Right cardiac atrium (tissue), 5 donors: ENCODE measurements at regions of chr17 and their contacts with region 1.

Region 1: DNA sequence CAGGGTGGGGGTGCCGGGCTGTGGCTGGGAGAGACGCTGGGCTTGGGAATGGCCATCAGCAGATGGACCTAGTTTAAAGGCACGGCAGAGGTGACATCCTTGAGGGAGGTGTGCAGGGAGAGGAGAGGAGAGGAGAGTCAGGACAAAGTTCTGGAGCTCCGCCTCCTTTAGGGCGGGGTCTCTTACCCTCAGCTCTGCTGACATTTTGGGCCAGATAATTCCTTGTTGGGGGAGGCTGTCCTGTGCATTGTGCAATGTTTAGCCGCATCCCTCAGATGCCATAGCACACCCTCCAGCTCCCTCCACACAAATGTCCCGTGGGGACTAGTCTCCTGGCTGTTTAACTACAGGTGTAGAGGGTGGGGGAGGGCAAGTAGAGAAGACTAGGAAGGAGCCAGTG is 48.3 kb downstream of the ARHGAP23 start:
- DNase-seq: peak in 2 of 3 donors; percentile 31 to 47
- ATAC-seq: no peak
- H3K4me3 ChIP-seq: no peak overlapping the region
- H3K27ac ChIP-seq: no peak overlapping the region
- H3K4me1 ChIP-seq: no peaks in the 10 kb centered on the region
- H3K27me3 ChIP-seq: no peaks in the 10 kb centered on the region

Region 2: GRCh38 chr17:38428112-38428642 is 48.4 kb before region 1 on chr17 and contains the start of gene ARHGAP23:
- intact Hi-C with region 1: loop called in 1 of 4 experiments (anchors 5 kb)
- DNase-seq: peak; percentile 78 to 90 (median 89)
- ATAC-seq: peak; percentile 58 to 64
- H3K4me3 ChIP-seq: peak within 1 kb of the TSS; percentile 90
- H3K27ac ChIP-seq: peak within 1 kb of the TSS; percentile 90
- H3K4me1 ChIP-seq: peaks cover 14% of the 10 kb centered on the region
- H3K27me3 ChIP-seq: no peaks in the 10 kb centered on the region
- total RNA-seq, gene ARHGAP23: 61.8 to 96.9 (median 77.4) TPM

Region 3: GRCh38 chr17:38435795-38436194 is 40.7 kb before region 1 on chr17:
- intact Hi-C with region 1: loop called in 3 of 4 experiments (anchors 5 kb)
- DNase-seq: peak in 1 of 3 donors; percentile 38
- ATAC-seq: no peak
- H3K4me3 ChIP-seq: no peak overlapping the region
- H3K27ac ChIP-seq: no peak overlapping the region
- H3K4me1 ChIP-seq: peaks cover 3% of the 10 kb centered on the region
- H3K27me3 ChIP-seq: no peaks in the 10 kb centered on the region